Common myeloid progenitor, CD34-positive (primary cell): ENCODE measurements at regions of chr19 and their contacts with region 1.

Region 1: GRCh38 chr19:14550201-14550784 is 20.9 kb downstream of the TECR start:
- DNase-seq: no peak
- H3K4me3 ChIP-seq: no peak overlapping the region
- H3K27ac ChIP-seq: peak overlapping the region in 1 of 2 experiments; percentile 67
- H3K4me1 ChIP-seq: peaks cover 0 to 29% (median 25%) of the 10 kb centered on the region in 4 experiments
- H3K27me3 ChIP-seq: no peaks in the 10 kb centered on the region

Region 2: DNA sequence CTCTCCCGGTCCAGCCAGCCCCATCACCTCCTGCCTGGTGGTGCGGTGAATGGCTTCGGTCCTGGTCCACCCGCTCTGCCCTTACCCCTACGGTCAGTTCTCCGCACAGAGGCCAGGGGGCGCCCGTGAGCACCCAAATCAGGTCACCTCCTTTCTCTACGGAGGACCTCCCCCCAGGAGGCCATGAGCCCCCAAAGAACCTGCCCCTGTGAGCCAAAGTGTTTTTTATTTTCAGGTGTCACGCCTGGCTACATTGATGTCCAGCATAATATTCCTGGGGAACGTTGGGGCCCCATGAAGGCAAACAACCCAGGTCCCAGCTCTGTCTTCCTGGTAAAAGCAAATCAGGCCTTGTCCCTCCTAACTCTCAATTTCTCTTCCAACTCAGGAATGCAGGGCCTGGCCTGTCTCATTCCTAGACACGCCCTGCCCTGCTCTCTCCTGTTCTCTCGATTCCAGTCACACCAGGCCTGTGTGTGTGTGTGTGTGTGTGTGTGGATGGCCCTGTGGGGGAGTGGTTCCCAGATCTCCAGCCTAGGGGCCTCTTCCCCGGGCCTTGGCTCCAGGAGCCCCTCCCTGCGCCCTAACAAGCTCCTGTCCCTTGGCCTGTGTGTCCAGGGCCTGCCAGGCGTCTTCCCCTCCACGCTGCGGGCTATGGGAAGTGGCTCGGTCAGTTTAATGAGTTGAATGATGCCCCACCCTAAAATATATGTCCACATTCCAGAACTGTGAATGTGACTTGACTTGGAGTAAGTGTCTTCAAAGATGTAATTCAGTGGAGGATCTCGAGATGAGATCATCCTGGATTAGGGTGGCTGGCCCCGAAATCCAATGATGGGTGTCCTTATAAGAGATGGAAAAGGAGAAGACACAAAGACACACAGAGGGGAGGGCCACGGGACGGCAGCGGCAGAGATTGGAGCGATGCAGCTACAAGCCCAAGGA is 44.5 kb before region 1 on chr19:
- CTCF ChIA-PET with region 1: interaction called, 34 read pairs
- POLR2A ChIA-PET with region 1: no interaction called
- DNase-seq: peak; percentile 63 to 81 (median 76)
- H3K4me3 ChIP-seq: no peak overlapping the region
- H3K27ac ChIP-seq: no peak overlapping the region
- H3K4me1 ChIP-seq: peaks cover 5 to 11% (median 6%) of the 10 kb centered on the region in 4 experiments
- H3K27me3 ChIP-seq: no peaks in the 10 kb centered on the region

Region 3: DNA sequence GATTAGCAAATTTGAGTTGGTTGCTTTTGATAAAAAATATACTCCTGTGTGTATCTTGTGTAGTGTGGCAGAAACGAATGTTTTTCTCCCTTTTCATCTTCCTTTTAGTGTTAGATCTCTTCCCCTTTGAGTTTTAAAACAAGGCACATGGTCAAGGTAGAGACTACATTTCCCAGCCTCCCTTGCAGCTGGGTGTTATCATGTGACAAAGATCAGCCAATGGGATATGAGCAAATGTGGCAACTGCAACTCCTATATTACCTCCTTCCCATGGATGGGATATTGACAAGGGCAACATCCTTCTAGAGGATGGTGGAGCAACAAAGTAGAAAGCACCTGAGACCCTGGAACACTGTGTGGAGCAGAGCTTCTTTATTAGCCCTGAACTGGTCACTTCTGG is 82.0 kb after region 1 on chr19:
- CTCF ChIA-PET with region 1: no interaction called
- POLR2A ChIA-PET with region 1: no interaction called
- DNase-seq: peak; percentile 29 to 51 (median 48)
- H3K4me3 ChIP-seq: no peak overlapping the region
- H3K27ac ChIP-seq: no peak overlapping the region
- H3K4me1 ChIP-seq: no peaks in the 10 kb centered on the region
- H3K27me3 ChIP-seq: no peaks in the 10 kb centered on the region